CD14-positive monocyte (primary cell): ENCODE measurements at regions of chrX and their contacts with region 1.

Region 1: DNA sequence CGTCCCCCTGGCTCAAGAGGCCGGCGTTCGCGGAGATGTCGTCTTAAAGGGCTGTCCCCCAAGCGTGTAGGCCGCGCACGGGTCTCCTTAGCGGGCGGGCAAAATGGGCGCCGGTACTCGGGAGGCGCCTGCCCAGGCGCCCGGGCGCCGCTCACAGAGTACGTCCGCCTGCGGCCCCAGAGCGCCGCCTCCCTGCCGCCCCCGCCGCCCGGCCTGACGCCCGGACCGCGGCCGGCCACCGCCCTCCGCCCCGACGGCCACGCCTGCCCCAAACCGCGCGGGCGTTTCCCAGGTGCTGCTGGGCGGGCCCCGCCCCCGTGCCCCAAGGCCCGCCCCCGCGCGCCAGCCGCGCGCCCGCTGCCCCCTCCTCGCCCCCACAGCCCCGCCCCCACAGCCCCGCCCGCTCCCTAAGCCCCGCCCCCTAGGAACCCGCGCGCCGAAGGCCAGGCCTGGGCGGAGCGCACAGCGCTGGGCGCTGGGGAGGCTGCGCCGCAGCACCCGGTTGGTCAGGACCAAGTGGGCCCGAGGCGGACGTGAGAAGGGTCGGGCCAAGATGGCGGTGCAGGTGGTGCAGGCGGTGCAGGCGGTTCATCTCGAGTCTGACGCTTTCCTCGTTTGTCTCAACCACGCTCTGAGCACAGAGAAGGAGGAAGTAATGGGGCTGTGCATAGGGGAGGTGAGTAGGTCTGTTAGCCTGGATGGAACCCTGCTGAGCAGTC is at the starts of genes BRCC3, CMC4 and MTCP1:
- DNase-seq: peak; percentile 67 to 80 (median 77)
- H3K4me3 ChIP-seq: peak within 1 kb of the TSS; percentile 77 to 84 (median 78)
- H3K4me3 Mint-ChIP-seq: peak within 1 kb of the TSS; percentile 84 to 91
- H3K27ac ChIP-seq: peak within 1 kb of the TSS; percentile 92 to 99
- H3K27ac Mint-ChIP-seq: peak within 1 kb of the TSS; percentile 93 to 98 (median 97)
- H3K4me1 ChIP-seq: peaks cover 16 to 20% of the 10 kb centered on the region in 2 donors
- H3K4me1 Mint-ChIP-seq: peaks cover 37% of the 10 kb centered on the region
- H3K27me3 ChIP-seq: no peaks in the 10 kb centered on the region
- H3K27me3 Mint-ChIP-seq: peaks cover 0 to 1% (median 0%) of the 10 kb centered on the region in 3 donors
- CTCF ChIP-seq: no peak
- polyA plus RNA-seq, gene BRCC3: 8.4 to 21.7 (median 10.0) TPM
- polyA plus RNA-seq, gene CMC4: 6.4 to 11.1 (median 10.1) TPM
- polyA plus RNA-seq, gene MTCP1: 1.3 to 23.3 (median 14.8) TPM

Region 2: DNA sequence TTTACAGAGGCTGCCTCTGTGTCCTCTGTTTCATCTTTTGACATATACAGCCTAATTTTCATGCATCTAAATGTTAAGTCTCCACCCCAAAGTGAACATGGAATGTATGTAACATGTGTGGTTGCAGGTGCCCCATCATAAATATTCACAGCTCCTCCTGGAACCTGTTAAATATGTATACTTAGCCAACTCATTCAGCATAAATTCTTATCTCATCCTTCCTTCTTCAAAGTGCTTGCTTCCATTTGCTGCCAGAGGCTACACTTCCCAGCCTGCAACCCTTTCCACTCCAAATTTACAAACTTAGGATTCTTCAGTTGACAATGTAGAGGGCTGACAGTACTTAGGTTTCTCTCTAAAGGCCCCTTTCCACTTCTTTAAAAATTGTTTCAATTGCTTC is 109.2 kb before region 1 on chrX:
- intact Hi-C with region 1: no loop called
- DNase-seq: no peak
- H3K4me3 ChIP-seq: no peak overlapping the region
- H3K4me3 Mint-ChIP-seq: no peak overlapping the region
- H3K27ac ChIP-seq: no peak overlapping the region
- H3K27ac Mint-ChIP-seq: no peak overlapping the region
- H3K4me1 ChIP-seq: no peaks in the 10 kb centered on the region
- H3K4me1 Mint-ChIP-seq: no peaks in the 10 kb centered on the region
- H3K27me3 ChIP-seq: no peaks in the 10 kb centered on the region
- H3K27me3 Mint-ChIP-seq: peaks cover 0 to 5% (median 0%) of the 10 kb centered on the region in 3 donors
- CTCF ChIP-seq: no peak

Region 3: DNA sequence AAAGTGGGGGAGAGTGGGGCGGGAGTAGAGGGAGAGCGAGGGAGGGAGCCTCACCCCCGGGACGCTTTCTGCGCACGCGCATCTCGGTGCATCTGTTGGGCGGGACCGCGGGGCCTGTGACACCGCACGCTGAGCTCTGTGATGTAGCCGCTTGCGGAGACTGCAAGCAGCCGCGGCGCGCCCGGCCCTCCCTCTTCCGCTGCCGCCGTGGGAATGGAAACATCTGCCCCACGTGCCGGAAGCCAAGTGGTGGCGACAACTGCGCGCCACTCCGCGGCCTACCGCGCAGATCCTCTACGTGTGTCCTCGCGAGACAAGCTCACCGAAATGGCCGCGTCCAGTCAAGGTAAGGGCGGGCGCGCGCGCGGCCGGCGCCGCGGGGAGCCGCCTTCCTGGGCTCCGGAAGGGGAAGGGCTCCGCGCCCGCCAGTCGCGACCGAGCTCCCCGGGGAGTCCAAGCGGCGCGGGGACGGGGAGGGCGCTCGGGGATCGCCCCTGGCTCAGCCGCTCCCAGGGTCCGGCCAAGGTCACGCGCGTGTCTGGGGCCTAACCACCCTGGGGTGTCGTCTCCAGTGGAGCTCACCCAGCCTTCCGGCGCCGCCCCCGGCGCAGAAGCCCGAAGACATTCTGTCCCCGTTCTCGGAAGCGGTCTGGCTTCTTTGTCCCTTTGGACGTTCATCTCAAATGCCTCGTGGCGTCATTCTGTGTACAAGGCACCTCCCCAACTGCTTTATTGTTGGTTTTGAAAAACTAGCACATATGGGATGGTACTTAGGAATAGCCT is 44.2 kb before region 1 on chrX and contains the start of gene FUNDC2:
- intact Hi-C with region 1: loop called (anchors 5 kb)
- DNase-seq: peak; percentile 89 to 95 (median 94)
- H3K4me3 ChIP-seq: peak within 1 kb of the TSS; percentile 58 to 85 (median 80)
- H3K4me3 Mint-ChIP-seq: peak within 1 kb of the TSS; percentile 76 to 82
- H3K27ac ChIP-seq: peak within 1 kb of the TSS; percentile 94 to 96
- H3K27ac Mint-ChIP-seq: peak within 1 kb of the TSS; percentile 95 to 97 (median 97)
- H3K4me1 ChIP-seq: peaks cover 5 to 6% of the 10 kb centered on the region in 2 donors
- H3K4me1 Mint-ChIP-seq: peaks cover 11% of the 10 kb centered on the region
- H3K27me3 ChIP-seq: peaks cover 0 to 2% of the 10 kb centered on the region in 2 donors
- H3K27me3 Mint-ChIP-seq: peaks cover 0 to 3% (median 0%) of the 10 kb centered on the region in 3 donors
- CTCF ChIP-seq: no peak
- polyA plus RNA-seq, gene FUNDC2: 42.7 to 166 (median 148) TPM